Gastrocnemius medialis (tissue), 4 donors: ENCODE measurements at regions of chr5 and their contacts with region 1.

Region 1: GRCh38 chr5:159262859-159263567 is at the start of gene UBLCP1:
- DNase-seq: peak; percentile 61 to 68
- ATAC-seq: peak; percentile 97 to 98
- H3K4me3 ChIP-seq: peak within 1 kb of the TSS; percentile 84 to 99 (median 92)
- H3K27ac ChIP-seq: peak within 1 kb of the TSS; percentile 89 to 94 (median 90)
- H3K4me1 ChIP-seq: peaks cover 19 to 20% of the 10 kb centered on the region in 2 donors
- H3K27me3 ChIP-seq: peaks cover 0 to 4% (median 0%) of the 10 kb centered on the region in 3 donors
- CTCF ChIP-seq: no peak
- POLR2A ChIP-seq: peak in 1 of 2 donors; percentile 48
- total RNA-seq, gene UBLCP1: 11.1 to 16.0 (median 14.3) TPM

Region 2: DNA sequence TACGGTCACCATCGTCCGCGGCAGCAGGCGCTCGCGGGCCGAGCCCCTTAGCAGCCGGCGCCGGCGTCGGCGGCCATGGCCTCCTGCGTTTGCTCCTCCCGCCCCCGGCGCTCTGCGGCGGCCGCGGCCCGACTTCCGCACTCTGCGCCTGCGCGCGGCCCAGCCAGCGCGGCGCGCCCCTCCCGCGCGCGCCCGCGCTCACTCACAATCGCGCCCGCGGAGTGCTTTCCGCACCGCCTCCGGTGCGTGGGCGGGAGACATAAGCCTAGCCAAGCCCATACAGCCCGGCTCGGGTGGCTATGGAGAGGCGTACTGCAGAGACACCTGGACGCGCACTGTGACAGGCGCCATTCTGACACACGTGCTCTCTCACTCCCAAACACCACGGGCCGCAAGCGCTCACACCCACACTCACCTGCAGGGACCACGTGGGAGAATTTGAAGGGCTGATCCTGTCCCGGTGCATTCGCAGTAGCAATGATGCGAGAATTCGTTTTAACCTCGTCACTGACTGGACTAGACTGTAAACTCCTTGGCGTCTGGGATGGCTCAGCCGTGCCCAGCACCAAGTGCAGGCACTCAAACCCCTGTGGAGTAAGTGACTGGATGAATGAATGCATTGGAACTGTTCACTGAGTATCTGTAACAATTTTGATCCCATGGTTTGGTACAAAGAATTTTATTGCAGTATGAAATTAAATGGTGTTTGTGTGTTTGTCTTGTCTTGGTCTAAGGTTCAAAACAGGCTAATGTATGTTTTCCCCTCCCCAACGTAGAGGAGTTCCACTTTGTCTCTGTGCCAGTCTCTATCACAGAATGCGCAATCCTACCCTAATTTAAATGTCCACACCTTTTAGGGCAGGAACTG is 53.3 kb before region 1 on chr5 and contains the start of gene RNF145:
- in situ Hi-C with region 1: loop called in 1 of 4 experiments (anchors 5 kb)
- intact Hi-C with region 1: loop called (anchors 1 kb)
- DNase-seq: peak; percentile 45 to 73
- ATAC-seq: peak; percentile 81 to 82
- H3K4me3 ChIP-seq: peak within 1 kb of the TSS; percentile 84 to 98 (median 90)
- H3K27ac ChIP-seq: peak within 1 kb of the TSS; percentile 85 to 93 (median 90)
- H3K4me1 ChIP-seq: peaks cover 31 to 34% of the 10 kb centered on the region in 2 donors
- H3K27me3 ChIP-seq: no peaks in the 10 kb centered on the region
- CTCF ChIP-seq: peak in 1 of 5 experiments; percentile 14
- POLR2A ChIP-seq: peak; percentile 65 to 74
- total RNA-seq, gene RNF145: 6.7 to 20.8 (median 9.7) TPM

Region 3: DNA sequence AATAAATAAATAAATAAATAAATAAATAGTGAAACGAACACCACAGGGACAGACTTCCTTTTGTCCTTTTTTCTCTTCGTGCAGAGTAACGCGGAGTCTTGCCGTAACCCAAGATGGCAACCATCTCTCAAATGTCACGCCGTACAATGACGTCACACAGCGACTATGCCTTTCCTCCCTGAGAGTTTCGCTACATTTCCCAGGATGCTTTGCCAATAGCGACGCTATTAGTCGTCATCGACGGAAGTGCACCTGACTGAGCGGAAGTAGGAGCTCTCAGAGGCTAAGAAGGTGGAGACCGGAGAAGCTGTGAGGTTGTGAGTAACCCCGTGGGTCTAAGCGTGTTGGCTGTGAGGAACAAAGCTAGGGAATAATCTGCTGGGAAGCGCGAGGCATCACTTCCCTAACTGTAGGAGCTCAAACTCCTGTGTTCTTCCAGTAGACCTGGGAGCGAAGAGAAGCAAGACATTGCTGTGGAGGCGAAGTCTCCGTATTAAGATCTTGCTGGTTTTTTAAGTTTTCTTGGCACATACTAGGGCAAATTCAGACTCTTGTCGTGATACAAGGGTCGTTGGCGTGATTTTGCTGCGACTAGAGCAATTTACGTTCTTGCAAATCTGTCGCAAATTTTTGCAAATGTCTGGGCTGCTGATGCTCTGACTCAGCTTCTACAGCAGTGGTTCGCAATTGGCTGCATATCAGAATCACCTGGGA is 746.0 kb after region 1 on chr5 and contains the start of gene TTC1:
- in situ Hi-C with region 1: no loop called
- intact Hi-C with region 1: loop called (anchors 2 kb)
- DNase-seq: peak; percentile 95
- ATAC-seq: peak; percentile 100
- H3K4me3 ChIP-seq: peak within 1 kb of the TSS; percentile 72 to 92 (median 82)
- H3K27ac ChIP-seq: peak within 1 kb of the TSS; percentile 84 to 88 (median 86)
- H3K4me1 ChIP-seq: peaks cover 10 to 20% of the 10 kb centered on the region in 2 donors
- H3K27me3 ChIP-seq: no peaks in the 10 kb centered on the region
- CTCF ChIP-seq: no peak
- POLR2A ChIP-seq: peak; percentile 74 to 89
- total RNA-seq, gene TTC1: 39.9 to 67.9 (median 56.3) TPM